BJ (cell line): ENCODE measurements at regions of chr16 and their contacts with region 1.

Region 1: DNA sequence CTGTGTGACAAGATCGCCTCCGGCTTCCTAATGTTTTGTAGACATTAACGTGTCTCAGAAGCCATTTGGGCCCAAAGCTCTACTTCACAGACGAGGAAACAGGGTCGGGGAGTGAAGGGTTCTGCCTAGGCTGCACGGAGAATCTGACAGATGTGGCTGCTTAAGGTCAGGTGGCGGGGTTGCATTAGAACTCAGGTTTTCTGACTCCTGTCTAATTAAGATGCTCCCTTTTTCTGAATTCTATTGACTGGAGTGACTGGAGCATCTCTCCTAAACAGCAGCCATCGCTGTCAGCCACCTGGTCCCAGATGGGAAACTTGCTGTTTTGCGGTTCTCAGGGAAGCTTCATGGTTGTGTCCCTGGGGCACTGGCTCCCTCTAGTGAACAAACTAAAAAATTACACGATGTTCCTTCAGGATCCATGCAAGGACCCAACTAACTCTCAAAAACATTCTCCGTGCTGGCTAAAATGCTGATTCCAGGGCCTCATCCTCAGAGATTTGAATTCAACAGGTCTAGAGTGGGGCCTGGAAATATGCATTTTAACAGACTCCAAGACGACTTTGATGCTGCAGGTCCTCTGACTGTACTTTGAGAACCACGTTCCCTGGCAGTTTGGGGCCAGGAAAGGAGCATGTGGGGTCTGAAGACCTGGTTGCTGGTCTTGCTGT is 117.4 kb downstream of the IRF8 start:
- DNase-seq: no peak
- H3K4me3 ChIP-seq: no peak overlapping the region
- H3K27me3 ChIP-seq: peaks cover 2% of the 10 kb centered on the region
- CTCF ChIP-seq: peak; percentile 80

Region 2: DNA sequence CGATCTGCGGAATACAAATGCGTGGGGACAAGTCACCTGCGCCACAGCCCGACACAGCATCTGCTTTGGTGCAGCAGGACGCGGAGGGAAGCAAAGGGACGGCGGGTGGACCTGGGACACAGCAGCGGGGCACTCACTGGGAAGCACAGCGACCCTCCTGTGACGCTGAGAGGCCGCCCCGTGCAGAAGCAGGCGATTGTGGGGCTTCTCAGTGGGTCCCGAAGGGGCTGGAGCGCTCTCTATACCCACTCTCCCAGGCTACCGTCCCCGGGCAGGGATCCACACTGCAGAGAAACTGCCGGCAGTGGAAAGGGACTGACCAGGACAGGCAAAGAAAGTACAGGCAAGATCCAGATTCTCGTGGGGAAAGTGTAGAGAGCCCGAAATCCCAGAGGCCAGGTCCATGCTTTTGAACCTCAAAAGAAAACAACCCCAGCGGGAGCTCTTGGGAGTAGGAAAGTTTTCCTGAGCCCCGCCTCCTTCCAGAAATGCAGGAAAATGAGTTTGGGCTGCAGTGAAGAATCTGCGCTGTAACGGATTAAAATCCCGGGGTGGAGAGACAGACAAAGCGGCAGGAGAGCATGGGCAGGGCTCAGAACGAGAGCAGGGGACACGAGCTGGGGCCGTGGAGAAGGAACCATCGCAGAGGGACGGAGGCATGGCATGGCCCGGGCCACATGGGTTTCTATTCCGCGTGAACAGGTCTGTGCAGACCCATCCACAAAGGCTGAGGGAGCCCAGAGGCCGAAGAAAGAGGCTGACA is 204.1 kb before region 1 on chr16:
- CTCF ChIA-PET with region 1: interaction called, 14 read pairs
- POLR2A ChIA-PET with region 1: no interaction called
- DNase-seq: no peak
- H3K4me3 ChIP-seq: no peak overlapping the region
- H3K27me3 ChIP-seq: peaks cover 13% of the 10 kb centered on the region
- CTCF ChIP-seq: no peak